Activated naive CD4-positive, alpha-beta T cell treated with anti-CD3 and anti-CD28 coated beads for 36 hours (primary cell): ENCODE measurements at regions of chr22 and their contacts with region 1.

Region 1: GRCh38 chr22:36470162-36470993 is 11.1 kb downstream of the TXN2 start:
- DNase-seq: peak; percentile 90
- H3K4me3 Mint-ChIP-seq: no peak overlapping the region
- H3K27ac Mint-ChIP-seq: peak overlapping the region; percentile 46
- H3K4me1 Mint-ChIP-seq: peaks cover 30% of the 10 kb centered on the region
- H3K27me3 Mint-ChIP-seq: no peaks in the 10 kb centered on the region

Region 2: GRCh38 chr22:36291831-36292740 is 178.3 kb before region 1 on chr22:
- CTCF ChIA-PET with region 1: interaction called, 119 read pairs
- intact Hi-C with region 1: no loop called
- DNase-seq: no peak
- H3K4me3 Mint-ChIP-seq: no peak overlapping the region
- H3K27ac Mint-ChIP-seq: no peak overlapping the region
- H3K4me1 Mint-ChIP-seq: peaks cover 20% of the 10 kb centered on the region
- H3K27me3 Mint-ChIP-seq: no peaks in the 10 kb centered on the region